HCT116 (cell line): ENCODE measurements at regions of chr17 and their contacts with region 1.

Region 1: DNA sequence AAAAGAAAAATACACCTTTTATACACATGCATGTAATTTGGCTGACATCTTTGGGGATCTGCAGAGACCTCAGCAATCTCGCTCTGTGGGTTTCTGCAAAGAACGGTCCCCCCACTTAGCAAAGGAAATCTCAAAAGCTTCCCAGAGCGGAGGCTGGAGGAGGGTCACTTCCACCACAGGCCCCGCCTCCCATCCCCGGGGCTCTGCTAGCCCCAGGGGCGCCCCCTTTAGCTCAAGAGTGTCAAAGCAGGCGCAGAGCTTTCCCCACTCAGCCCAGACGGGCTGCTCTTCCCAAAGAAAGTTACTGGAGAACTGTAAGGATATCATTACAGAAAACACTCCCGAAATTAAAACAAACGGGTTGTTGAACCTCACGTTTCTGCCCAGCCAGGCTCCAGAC is 11.4 kb downstream of the SLC13A5 start:
- DNase-seq: peak; percentile 33
- ATAC-seq: peak; percentile 100
- H3K4me3 ChIP-seq: no peak overlapping the region
- H3K27ac ChIP-seq: no peak overlapping the region
- H3K4me1 ChIP-seq: no peaks in the 10 kb centered on the region
- H3K27me3 ChIP-seq: no peaks in the 10 kb centered on the region
- CTCF ChIP-seq: peak; percentile 43 to 81 (median 70); a peak in 5 of 6 replicates
- POLR2A ChIP-seq: no peak
- RAD21 ChIP-seq: peak; percentile 57

Region 2: DNA sequence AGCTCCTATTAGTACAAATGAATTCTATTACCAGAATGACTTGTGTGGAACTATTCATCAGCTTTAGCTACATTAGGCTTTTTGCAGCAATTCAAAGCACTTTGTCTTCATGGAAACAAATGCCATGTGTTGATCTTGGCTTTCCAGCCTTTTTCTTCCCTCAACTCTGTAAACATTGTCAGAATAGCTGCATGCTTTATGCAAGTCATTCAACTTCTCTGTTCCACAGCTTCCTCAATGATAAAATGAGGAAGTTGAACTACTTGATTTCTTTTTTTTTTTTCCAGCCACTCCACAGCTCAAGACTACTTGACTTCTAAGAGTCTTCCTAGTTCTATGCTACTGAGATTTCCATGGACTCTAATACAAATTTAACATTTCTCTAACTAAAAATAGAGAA is 102.4 kb before region 1 on chr17:
- CTCF ChIA-PET with region 1: no interaction called
- POLR2A ChIA-PET with region 1: no interaction called
- RAD21 ChIA-PET with region 1: no interaction called
- intact Hi-C with region 1: no loop called
- DNase-seq: no peak
- ATAC-seq: no peak
- H3K4me3 ChIP-seq: no peak overlapping the region
- H3K27ac ChIP-seq: no peak overlapping the region
- H3K4me1 ChIP-seq: no peaks in the 10 kb centered on the region
- H3K27me3 ChIP-seq: no peaks in the 10 kb centered on the region
- CTCF ChIP-seq: no peak
- POLR2A ChIP-seq: no peak
- RAD21 ChIP-seq: no peak

Region 3: GRCh38 chr17:6666077-6666521 is 35.6 kb before region 1 on chr17:
- CTCF ChIA-PET with region 1: interaction called, 13 read pairs
- POLR2A ChIA-PET with region 1: no interaction called
- RAD21 ChIA-PET with region 1: interaction called in 1 of 2 experiments, 4 read pairs
- intact Hi-C with region 1: no loop called
- DNase-seq: peak; percentile 81
- ATAC-seq: peak; percentile 82
- H3K4me3 ChIP-seq: no peak overlapping the region
- H3K27ac ChIP-seq: no peak overlapping the region
- H3K4me1 ChIP-seq: peaks cover 18 to 41% of the 10 kb centered on the region in 2 experiments
- H3K27me3 ChIP-seq: no peaks in the 10 kb centered on the region; the same call in 1 of the 2 replicates
- CTCF ChIP-seq: peak; percentile 94 to 95 (median 95)
- POLR2A ChIP-seq: no peak
- RAD21 ChIP-seq: peak; percentile 99

Region 4: GRCh38 chr17:6713130-6713917 is 11.6 kb after region 1 on chr17 and contains the start of gene SLC13A5:
- CTCF ChIA-PET with region 1: interaction called, 10 read pairs
- POLR2A ChIA-PET with region 1: no interaction called
- RAD21 ChIA-PET with region 1: no interaction called
- intact Hi-C with region 1: no loop called
- DNase-seq: no peak
- ATAC-seq: peak; percentile 58
- H3K4me3 ChIP-seq: no peak within 1 kb of the TSS
- H3K27ac ChIP-seq: no peak within 1 kb of the TSS
- H3K4me1 ChIP-seq: peaks cover 8% of the 10 kb centered on the region in 2 experiments; a peak in 3 of 4 replicates
- H3K27me3 ChIP-seq: no peaks in the 10 kb centered on the region
- CTCF ChIP-seq: no peak
- POLR2A ChIP-seq: no peak
- RAD21 ChIP-seq: no peak
- total RNA-seq, gene SLC13A5: 0.07 TPM